ENCODE measurements at regions of chr1 and their contacts with region 1.

Region 1: DNA sequence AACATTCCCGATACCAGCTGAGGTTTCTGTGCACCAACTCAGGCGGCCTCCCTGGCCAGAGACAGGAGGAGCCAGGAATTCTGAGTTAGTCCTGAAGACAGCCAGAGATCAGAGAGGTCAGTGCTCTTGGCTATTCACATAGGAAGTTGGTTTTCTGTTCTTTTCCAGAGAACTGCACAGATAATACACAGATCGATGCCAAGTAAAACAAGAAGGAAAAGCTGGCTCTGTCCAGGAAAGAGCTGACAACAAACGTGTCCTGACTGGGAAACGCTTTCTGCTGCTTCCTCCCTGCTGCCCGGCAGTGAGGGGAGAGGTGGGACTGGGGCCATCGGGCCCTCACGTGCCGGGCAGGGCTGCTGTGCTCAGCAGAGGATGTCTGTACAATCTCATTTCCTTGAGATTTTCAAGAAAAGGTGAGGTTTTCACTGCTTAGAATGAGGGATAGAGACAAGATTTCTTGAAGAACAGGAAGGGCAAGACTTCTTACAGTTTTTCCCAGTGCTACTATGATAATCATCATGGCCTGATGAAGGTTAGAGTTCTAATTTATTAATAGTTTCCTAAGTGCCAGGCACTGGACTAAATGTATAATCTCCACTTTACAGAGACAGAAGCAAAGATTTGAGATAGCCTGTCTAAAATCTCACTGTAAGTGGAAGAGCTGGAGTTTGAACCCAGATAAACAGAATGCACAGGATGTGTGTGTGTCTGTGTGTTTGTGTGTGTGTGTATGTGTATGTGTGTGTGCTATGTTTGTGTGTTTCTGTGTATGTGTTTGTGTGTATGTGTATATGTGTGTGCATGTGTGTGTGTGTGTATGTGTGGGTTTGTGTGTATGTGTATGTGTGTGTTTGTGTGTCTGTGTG is 211.0 kb upstream of the RAB4A start:
- DNase-seq: peak; percentile 87

Region 2: GRCh38 chr1:228734881-228735801 is 324.8 kb before region 1 on chr1 and contains the start of gene RHOU:
- intact Hi-C with region 1: loop called in 1 of 2 experiments (anchors 10 kb)
- DNase-seq: peak; percentile 94
- total RNA-seq, gene RHOU: 15.7 to 24.6 TPM

Region 3: GRCh38 chr1:228891272-228892034 is 168.5 kb before region 1 on chr1:
- intact Hi-C with region 1: no loop called
- DNase-seq: no peak

Region 4: DNA sequence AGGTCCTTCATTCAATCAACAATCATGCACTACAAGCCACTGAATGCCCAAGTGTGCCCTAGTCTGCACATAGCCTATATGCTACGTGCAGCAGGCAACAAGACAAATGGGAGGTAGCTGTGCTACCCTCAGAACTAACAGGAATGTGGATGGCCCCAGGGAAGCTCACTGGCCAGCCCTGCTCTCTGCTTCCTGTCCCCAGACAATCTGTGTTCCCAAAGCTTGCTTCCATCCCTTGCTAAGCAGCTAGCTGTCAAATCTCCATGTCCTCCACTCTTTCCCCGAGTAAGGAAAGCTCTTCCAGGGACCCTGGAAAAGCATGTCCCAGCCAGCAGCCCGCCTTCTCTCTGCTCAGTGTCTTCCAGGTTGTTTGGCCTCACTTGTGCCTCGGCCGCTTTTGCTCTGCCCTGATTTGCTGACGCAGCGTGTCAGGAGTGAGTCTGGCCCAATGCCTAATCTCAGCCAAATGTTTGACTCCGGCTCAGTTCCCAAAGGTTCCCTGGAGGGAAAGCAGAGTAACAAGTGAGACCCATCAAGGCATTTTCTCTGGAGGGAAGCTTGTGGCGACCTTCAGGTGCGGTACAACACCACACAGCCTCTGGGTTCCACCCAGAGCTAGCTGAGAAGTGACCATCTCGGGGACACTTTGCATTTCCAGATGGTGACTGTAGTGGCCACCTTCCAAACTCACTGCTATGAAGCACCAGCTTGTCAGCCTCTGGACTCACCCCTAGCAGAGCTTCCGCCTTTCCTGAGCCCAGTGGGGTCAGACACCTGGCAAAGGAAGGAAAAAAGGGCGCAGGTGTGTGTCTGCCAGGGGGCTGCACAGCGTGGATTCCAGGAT is 81.2 kb before region 1 on chr1:
- intact Hi-C with region 1: no loop called
- DNase-seq: no peak

Region 5: GRCh38 chr1:229227298-229227919 is 167.5 kb after region 1 on chr1:
- intact Hi-C with region 1: loop called in 1 of 2 experiments (anchors 10 kb)
- DNase-seq: peak; percentile 94

Measured in posterior vena cava (tissue), 2 donors.